Activated CD8-positive, alpha-beta T cell treated with anti-CD3 and anti-CD28 coated beads, Interleukin-2, amount 10 ng/mL, durations not matched to agents 7 days and 5 days (primary cell): ENCODE measurements at regions of chr4 and their contacts with region 1.

Region 1: GRCh38 chr4:147866532-147867271 is 134.8 kb downstream of the ARHGAP10 start:
- DNase-seq: peak; percentile 96
- ATAC-seq: peak; percentile 98
- H3K4me3 Mint-ChIP-seq: no peak overlapping the region
- H3K27ac Mint-ChIP-seq: no peak overlapping the region
- H3K4me1 Mint-ChIP-seq: peaks cover 3% of the 10 kb centered on the region
- H3K27me3 Mint-ChIP-seq: no peaks in the 10 kb centered on the region

Region 2: DNA sequence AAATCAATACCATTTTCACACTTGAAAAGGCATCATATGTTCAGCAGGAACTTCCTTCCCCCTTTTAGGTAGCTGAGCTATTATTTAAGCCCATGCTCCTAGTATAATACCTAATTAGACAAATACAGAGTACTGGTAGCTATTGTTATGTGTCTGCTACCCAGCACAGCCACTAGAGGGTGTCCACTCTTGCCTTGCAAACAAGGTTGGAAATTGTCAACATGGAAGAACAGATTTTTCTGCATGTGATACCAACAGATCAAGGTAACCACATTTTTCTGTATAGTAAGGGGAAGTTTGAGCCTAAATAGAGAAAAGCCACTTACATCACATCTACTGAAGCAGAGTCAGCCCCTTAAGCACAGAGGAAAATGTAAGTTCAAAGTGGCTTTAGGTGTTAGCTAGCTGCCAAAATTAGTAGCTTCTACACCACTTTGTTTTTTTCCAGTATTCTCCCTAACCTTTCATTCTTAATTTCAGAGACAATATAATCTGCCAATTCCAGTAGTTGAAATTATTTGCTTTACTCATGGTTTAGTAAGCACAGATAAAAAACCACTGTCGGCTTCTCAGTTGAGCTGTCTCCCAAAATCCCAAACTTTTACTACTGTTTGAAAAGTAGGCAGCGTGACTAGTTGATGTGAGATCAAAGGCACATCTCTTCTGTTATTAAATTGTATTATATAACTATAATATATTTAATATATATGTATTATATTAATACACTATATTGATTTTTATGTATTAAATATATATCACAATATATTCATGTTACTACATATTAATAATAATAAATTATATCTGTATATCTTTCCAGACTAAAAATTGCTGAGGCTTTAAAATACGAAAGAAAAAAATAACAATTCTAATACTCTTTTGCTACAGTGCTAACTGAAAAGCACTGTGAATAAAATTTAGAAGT is 347.6 kb before region 1 on chr4:
- CTCF ChIA-PET with region 1: interaction called, 55 read pairs
- POLR2A ChIA-PET with region 1: no interaction called
- DNase-seq: peak; percentile 64
- ATAC-seq: peak; percentile 60
- H3K4me3 Mint-ChIP-seq: no peak overlapping the region
- H3K27ac Mint-ChIP-seq: no peak overlapping the region
- H3K4me1 Mint-ChIP-seq: no peaks in the 10 kb centered on the region
- H3K27me3 Mint-ChIP-seq: peaks cover 9% of the 10 kb centered on the region

Region 3: GRCh38 chr4:147638942-147639341 is 227.8 kb before region 1 on chr4:
- CTCF ChIA-PET with region 1: interaction called, 28 read pairs
- POLR2A ChIA-PET with region 1: no interaction called
- DNase-seq: no peak
- ATAC-seq: peak; percentile 47
- H3K4me3 Mint-ChIP-seq: peak overlapping the region; percentile 23
- H3K27ac Mint-ChIP-seq: no peak overlapping the region
- H3K4me1 Mint-ChIP-seq: peaks cover 17% of the 10 kb centered on the region
- H3K27me3 Mint-ChIP-seq: no peaks in the 10 kb centered on the region

Region 4: GRCh38 chr4:147707865-147708672 is 158.6 kb before region 1 on chr4:
- CTCF ChIA-PET with region 1: interaction called, 160 read pairs
- POLR2A ChIA-PET with region 1: no interaction called
- DNase-seq: peak; percentile 62
- ATAC-seq: peak; percentile 71
- H3K4me3 Mint-ChIP-seq: no peak overlapping the region
- H3K27ac Mint-ChIP-seq: no peak overlapping the region
- H3K4me1 Mint-ChIP-seq: peaks cover 12% of the 10 kb centered on the region
- H3K27me3 Mint-ChIP-seq: peaks cover 13% of the 10 kb centered on the region

Region 5: DNA sequence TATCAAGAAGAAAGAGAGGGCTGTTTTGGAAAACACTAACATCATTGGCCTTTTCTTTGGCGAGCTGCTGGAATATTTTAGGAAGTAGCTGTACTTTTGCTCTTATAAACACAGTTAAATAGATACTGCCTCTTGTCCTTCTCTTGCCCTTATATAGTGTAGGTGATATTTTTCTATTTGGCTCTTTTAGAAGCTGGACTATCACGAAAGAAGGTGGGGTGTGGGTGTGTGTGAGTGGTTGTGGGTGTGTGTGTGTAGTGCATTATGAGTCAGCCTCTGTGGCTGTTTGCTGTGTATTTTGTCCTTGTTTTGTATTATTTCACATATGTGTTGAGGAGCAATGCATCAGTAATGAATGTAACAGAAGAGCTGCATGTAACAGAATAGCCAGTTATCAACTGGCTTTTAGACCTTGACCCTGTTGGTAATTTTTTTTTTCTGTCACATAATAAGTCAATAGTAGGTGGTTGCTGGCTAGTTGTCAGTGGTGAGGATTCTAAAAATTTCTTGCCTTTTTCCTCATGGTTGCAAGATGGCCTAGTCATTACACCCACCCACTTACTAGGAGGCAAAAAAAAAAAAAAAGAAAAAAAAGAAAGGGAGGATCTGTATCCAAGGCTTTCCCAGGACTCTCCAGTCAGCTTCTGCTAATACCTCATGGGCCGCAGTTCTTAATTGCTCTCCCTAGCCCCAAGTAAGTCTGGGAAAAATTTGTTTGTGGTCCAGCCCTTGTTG is 111.0 kb before region 1 on chr4:
- CTCF ChIA-PET with region 1: interaction called, 18 read pairs
- POLR2A ChIA-PET with region 1: no interaction called
- DNase-seq: no peak
- ATAC-seq: no peak
- H3K4me3 Mint-ChIP-seq: no peak overlapping the region
- H3K27ac Mint-ChIP-seq: no peak overlapping the region
- H3K4me1 Mint-ChIP-seq: no peaks in the 10 kb centered on the region
- H3K27me3 Mint-ChIP-seq: no peaks in the 10 kb centered on the region

Region 6: GRCh38 chr4:147822128-147822527 is 44.6 kb before region 1 on chr4:
- CTCF ChIA-PET with region 1: interaction called, 12 read pairs
- POLR2A ChIA-PET with region 1: no interaction called
- DNase-seq: no peak
- ATAC-seq: no peak
- H3K4me3 Mint-ChIP-seq: no peak overlapping the region
- H3K27ac Mint-ChIP-seq: no peak overlapping the region
- H3K4me1 Mint-ChIP-seq: no peaks in the 10 kb centered on the region
- H3K27me3 Mint-ChIP-seq: no peaks in the 10 kb centered on the region

Region 7: GRCh38 chr4:147879676-147880075 is 13.0 kb after region 1 on chr4:
- CTCF ChIA-PET with region 1: interaction called, 43 read pairs
- POLR2A ChIA-PET with region 1: no interaction called
- DNase-seq: no peak
- ATAC-seq: no peak
- H3K4me3 Mint-ChIP-seq: no peak overlapping the region
- H3K27ac Mint-ChIP-seq: no peak overlapping the region
- H3K4me1 Mint-ChIP-seq: no peaks in the 10 kb centered on the region
- H3K27me3 Mint-ChIP-seq: no peaks in the 10 kb centered on the region

Region 8: GRCh38 chr4:147984065-147984777 is 117.5 kb after region 1 on chr4:
- CTCF ChIA-PET with region 1: no interaction called
- POLR2A ChIA-PET with region 1: no interaction called
- DNase-seq: peak; percentile 57
- ATAC-seq: peak; percentile 76
- H3K4me3 Mint-ChIP-seq: no peak overlapping the region
- H3K27ac Mint-ChIP-seq: no peak overlapping the region
- H3K4me1 Mint-ChIP-seq: peaks cover 21% of the 10 kb centered on the region
- H3K27me3 Mint-ChIP-seq: no peaks in the 10 kb centered on the region